Endothelial cell of umbilical vein (primary cell): ENCODE measurements at regions of chrX and their contacts with region 1.

Region 1: GRCh38 chrX:30635630-30636029 is 17.6 kb upstream of the GK start:
- DNase-seq: peak; percentile 1
- H3K4me3 ChIP-seq: no peak overlapping the region
- H3K27ac ChIP-seq: no peak overlapping the region
- H3K4me1 ChIP-seq: no peaks in the 10 kb centered on the region
- H3K27me3 ChIP-seq: no peaks in the 10 kb centered on the region
- CTCF ChIP-seq: no peak
- POLR2A ChIP-seq: no peak

Region 2: DNA sequence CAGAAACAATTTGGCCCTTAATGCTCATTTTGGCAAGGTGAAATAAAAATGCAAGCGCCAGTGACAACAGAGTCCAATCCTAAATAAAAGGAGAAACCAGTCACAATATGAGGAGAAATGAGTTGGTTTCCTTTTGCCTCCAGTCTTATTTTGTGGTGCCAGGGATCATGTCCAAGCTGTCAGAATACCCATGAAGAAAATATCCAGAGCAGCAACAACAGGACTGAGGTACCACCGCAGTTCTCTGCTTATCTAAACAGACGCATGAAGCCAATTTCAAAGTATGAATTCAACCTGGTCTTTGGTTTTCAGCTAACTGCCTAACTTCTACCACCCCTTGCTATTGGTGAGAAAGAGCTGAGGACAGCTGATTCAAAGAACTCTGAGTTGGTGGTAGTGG is 620.2 kb before region 1 on chrX:
- CTCF ChIA-PET with region 1: no interaction called
- POLR2A ChIA-PET with region 1: no interaction called
- dilution Hi-C with region 1: no loop called
- intact Hi-C with region 1: no loop called
- DNase-seq: no peak
- H3K4me3 ChIP-seq: no peak overlapping the region
- H3K27ac ChIP-seq: no peak overlapping the region
- H3K4me1 ChIP-seq: no peaks in the 10 kb centered on the region
- H3K27me3 ChIP-seq: no peaks in the 10 kb centered on the region
- CTCF ChIP-seq: no peak
- POLR2A ChIP-seq: no peak

Region 3: GRCh38 chrX:30577362-30577991 is 58.2 kb before region 1 on chrX and contains the start of gene TASL:
- CTCF ChIA-PET with region 1: no interaction called
- POLR2A ChIA-PET with region 1: no interaction called
- dilution Hi-C with region 1: no loop called
- intact Hi-C with region 1: no loop called
- DNase-seq: no peak
- H3K4me3 ChIP-seq: no peak within 1 kb of the TSS
- H3K27ac ChIP-seq: no peak within 1 kb of the TSS
- H3K4me1 ChIP-seq: no peaks in the 10 kb centered on the region
- H3K27me3 ChIP-seq: no peaks in the 10 kb centered on the region
- CTCF ChIP-seq: no peak
- POLR2A ChIP-seq: no peak
- total RNA-seq, gene TASL: not detected in 2 replicates

Region 4: DNA sequence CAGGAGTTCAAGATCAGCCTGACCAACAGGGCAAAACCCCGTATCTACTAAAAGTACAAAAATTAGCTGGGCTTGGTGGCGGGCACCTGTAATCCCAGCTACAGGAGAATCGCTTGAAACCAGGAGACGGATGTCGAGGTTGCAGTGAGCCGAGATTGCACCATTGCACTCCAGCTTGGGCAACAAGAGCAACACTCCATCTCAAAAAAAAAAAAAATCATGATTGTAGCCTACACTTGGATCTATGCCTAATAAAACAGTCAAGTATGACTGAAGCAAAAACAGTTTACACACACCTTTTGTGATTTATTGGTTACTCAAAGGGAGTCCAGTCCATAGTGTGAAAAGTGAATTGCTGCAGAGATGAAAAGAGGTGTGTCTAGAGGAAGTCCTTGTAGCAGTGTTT is 23.4 kb before region 1 on chrX:
- CTCF ChIA-PET with region 1: no interaction called
- POLR2A ChIA-PET with region 1: no interaction called
- dilution Hi-C with region 1: no loop called
- intact Hi-C with region 1: no loop called
- DNase-seq: no peak
- H3K4me3 ChIP-seq: no peak overlapping the region
- H3K27ac ChIP-seq: no peak overlapping the region
- H3K4me1 ChIP-seq: no peaks in the 10 kb centered on the region
- H3K27me3 ChIP-seq: no peaks in the 10 kb centered on the region
- CTCF ChIP-seq: no peak
- POLR2A ChIP-seq: no peak

Region 5: DNA sequence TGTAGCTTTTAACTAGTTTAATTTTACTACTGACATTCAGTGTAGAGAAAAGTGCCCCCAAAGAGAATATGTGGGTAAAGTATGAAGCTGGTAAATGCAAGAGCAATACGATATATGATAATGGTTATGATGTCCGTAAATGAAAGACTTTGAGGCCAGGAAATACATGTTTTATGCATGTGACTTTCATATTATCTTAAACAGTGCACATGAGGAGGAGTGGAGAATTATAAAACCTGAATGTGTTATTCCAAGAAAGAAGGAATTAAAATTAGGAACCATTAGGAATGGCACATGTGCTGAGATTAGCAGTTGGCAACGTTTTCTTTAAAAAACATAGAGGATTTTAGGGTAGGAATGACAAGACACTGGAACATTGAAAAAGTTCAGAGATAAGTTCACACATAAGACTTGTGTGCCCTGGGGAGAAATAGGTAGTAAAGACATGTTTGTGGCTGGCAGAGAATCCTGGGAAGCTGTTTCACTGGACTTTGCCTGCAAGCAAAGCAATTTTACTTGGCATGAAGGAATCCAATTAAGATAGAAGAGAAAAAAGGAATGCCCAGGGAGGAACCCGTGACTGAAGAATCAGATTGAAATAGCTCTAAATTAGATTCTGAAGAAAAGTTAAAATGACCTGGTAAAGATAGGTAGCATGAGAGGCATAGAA is 37.6 kb after region 1 on chrX:
- CTCF ChIA-PET with region 1: interaction called, 10 read pairs
- POLR2A ChIA-PET with region 1: no interaction called
- dilution Hi-C with region 1: no loop called
- intact Hi-C with region 1: no loop called
- DNase-seq: no peak
- H3K4me3 ChIP-seq: no peak overlapping the region
- H3K27ac ChIP-seq: no peak overlapping the region
- H3K4me1 ChIP-seq: no peaks in the 10 kb centered on the region
- H3K27me3 ChIP-seq: no peaks in the 10 kb centered on the region
- CTCF ChIP-seq: no peak
- POLR2A ChIP-seq: no peak

Region 6: GRCh38 chrX:30690330-30690729 is 54.7 kb after region 1 on chrX:
- CTCF ChIA-PET with region 1: interaction called, 11 read pairs
- POLR2A ChIA-PET with region 1: no interaction called
- dilution Hi-C with region 1: no loop called
- intact Hi-C with region 1: no loop called
- DNase-seq: peak; percentile 34
- H3K4me3 ChIP-seq: no peak overlapping the region
- H3K27ac ChIP-seq: no peak overlapping the region
- H3K4me1 ChIP-seq: peaks cover 7% of the 10 kb centered on the region
- H3K27me3 ChIP-seq: no peaks in the 10 kb centered on the region
- CTCF ChIP-seq: no peak
- POLR2A ChIP-seq: no peak

Region 7: GRCh38 chrX:30713061-30713525 is 77.5 kb after region 1 on chrX:
- CTCF ChIA-PET with region 1: interaction called, 21 read pairs
- POLR2A ChIA-PET with region 1: no interaction called
- dilution Hi-C with region 1: no loop called
- intact Hi-C with region 1: loop called (anchors 1 kb)
- DNase-seq: peak; percentile 45
- H3K4me3 ChIP-seq: no peak overlapping the region
- H3K27ac ChIP-seq: no peak overlapping the region
- H3K4me1 ChIP-seq: no peaks in the 10 kb centered on the region
- H3K27me3 ChIP-seq: no peaks in the 10 kb centered on the region
- CTCF ChIP-seq: peak; percentile 40 to 56
- POLR2A ChIP-seq: no peak

Region 8: GRCh38 chrX:30822068-30822681 is 186.5 kb after region 1 on chrX:
- CTCF ChIA-PET with region 1: no interaction called
- POLR2A ChIA-PET with region 1: no interaction called
- dilution Hi-C with region 1: no loop called
- intact Hi-C with region 1: no loop called
- DNase-seq: no peak
- H3K4me3 ChIP-seq: no peak overlapping the region
- H3K27ac ChIP-seq: no peak overlapping the region
- H3K4me1 ChIP-seq: no peaks in the 10 kb centered on the region
- H3K27me3 ChIP-seq: peaks cover 0 to 2% of the 10 kb centered on the region in 2 experiments
- CTCF ChIP-seq: no peak
- POLR2A ChIP-seq: no peak